Transverse colon (tissue), 4 donors: ENCODE measurements at regions of chr17 and their contacts with region 1.

Region 1: GRCh38 chr17:48791128-48792032 is 25.6 kb downstream of the TTLL6 start:
- DNase-seq: peak; percentile 90
- H3K4me3 ChIP-seq: no peak overlapping the region
- H3K27ac ChIP-seq: peak overlapping the region in 2 of 4 donors; percentile 1 to 44
- H3K4me1 ChIP-seq: peaks cover 4 to 40% (median 22%) of the 10 kb centered on the region in 4 donors
- H3K27me3 ChIP-seq: no peaks in the 10 kb centered on the region
- CTCF ChIP-seq: peak; percentile 68 to 88 (median 75)
- EP300 ChIP-seq: no peak
- POLR2A ChIP-seq: no peak

Region 2: DNA sequence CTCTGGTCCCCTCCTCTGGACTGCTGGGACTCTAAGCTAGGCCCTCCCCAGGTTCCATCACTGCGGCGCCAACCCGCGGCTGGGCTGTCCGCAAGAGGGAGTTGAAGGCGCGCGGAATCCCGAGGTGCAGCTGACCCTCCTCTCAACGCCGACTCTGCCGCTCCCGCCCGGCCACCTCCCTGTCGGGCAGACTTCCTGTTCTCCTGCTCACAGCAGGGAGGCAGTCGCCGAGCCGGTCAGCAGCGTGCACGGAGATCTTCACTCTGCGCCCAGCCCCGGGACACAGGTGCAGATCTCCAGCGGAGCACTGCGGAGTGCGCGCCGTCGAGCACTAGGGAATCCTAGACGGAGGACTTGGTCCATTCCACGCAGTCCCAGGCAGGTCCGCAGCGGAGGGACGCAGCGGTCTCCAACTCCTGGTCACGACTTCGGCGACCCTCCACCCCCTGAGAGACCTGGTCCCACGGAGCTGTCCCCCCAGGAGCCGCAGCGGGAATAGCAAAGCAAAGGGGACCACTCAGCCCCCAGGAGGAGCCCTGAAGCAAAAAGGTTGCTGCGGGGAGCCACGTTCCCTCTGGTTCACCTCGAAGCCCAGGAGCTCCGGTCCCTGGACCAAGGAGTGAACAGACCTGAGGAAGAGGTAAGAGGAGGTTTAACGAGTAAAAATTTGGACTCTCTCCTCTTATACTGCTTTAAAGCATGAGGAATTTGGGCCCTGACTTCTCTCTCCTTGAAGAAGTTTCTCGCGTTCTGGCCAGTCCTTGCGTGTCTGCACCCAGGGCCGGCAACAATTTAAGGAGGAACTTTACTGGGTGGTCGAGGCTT is 148.7 kb before region 1 on chr17:
- in situ Hi-C with region 1: no loop called
- intact Hi-C with region 1: no loop called
- DNase-seq: peak; percentile 81
- H3K4me3 ChIP-seq: peak overlapping the region in 3 of 4 donors; percentile 23 to 60 (median 57)
- H3K27ac ChIP-seq: peak overlapping the region; percentile 86 to 93 (median 90)
- H3K4me1 ChIP-seq: peaks cover 2 to 34% (median 21%) of the 10 kb centered on the region in 4 donors
- H3K27me3 ChIP-seq: peaks cover 94% of the 10 kb centered on the region
- CTCF ChIP-seq: peak in 2 of 5 experiments; percentile 20 to 50
- EP300 ChIP-seq: no peak
- POLR2A ChIP-seq: peak; percentile 84

Region 3: DNA sequence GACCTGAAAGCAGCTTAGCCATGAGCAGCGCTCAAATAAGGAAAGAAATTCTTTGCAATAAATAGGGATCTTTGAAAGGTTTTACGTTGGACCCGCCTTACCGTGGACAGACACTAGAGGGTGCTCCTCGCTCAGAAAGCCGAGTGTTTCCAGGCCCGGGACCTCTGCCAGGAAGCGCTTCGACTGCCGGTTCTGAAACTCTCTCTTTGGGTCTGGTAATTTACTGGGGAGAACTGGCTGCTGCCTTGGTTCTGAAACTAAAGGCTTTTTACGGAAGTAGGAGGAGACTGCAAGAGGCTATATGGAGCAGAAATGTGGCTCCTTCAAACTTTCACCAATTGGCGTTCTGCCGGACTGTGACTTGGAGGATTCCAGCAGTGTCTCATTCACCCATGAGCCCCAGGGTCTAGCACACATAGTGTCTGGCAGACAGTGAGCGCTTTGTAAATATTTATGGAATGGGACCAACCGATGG is 119.6 kb before region 1 on chr17:
- in situ Hi-C with region 1: loop called in 2 of 4 experiments (anchors 25 kb)
- intact Hi-C with region 1: loop called (anchors 5 kb)
- DNase-seq: peak; percentile 87
- H3K4me3 ChIP-seq: peak overlapping the region in 1 of 4 donors; percentile 25
- H3K27ac ChIP-seq: peak overlapping the region in 2 of 4 donors; percentile 36 to 43
- H3K4me1 ChIP-seq: peaks cover 2 to 11% (median 8%) of the 10 kb centered on the region in 4 donors
- H3K27me3 ChIP-seq: peaks cover 11% of the 10 kb centered on the region
- CTCF ChIP-seq: peak; percentile 84 to 92 (median 90)
- EP300 ChIP-seq: no peak
- POLR2A ChIP-seq: no peak

Region 4: GRCh38 chr17:48678141-48678971 is 113.0 kb before region 1 on chr17:
- in situ Hi-C with region 1: loop called in 3 of 4 experiments (anchors 10 to 25 kb)
- intact Hi-C with region 1: loop called (anchors 5 kb)
- DNase-seq: peak; percentile 68
- H3K4me3 ChIP-seq: no peak overlapping the region
- H3K27ac ChIP-seq: no peak overlapping the region
- H3K4me1 ChIP-seq: peaks cover 0 to 6% (median 3%) of the 10 kb centered on the region in 4 donors
- H3K27me3 ChIP-seq: peaks cover 12% of the 10 kb centered on the region
- CTCF ChIP-seq: peak; percentile 86 to 95 (median 92)
- EP300 ChIP-seq: no peak
- POLR2A ChIP-seq: no peak

Region 5: DNA sequence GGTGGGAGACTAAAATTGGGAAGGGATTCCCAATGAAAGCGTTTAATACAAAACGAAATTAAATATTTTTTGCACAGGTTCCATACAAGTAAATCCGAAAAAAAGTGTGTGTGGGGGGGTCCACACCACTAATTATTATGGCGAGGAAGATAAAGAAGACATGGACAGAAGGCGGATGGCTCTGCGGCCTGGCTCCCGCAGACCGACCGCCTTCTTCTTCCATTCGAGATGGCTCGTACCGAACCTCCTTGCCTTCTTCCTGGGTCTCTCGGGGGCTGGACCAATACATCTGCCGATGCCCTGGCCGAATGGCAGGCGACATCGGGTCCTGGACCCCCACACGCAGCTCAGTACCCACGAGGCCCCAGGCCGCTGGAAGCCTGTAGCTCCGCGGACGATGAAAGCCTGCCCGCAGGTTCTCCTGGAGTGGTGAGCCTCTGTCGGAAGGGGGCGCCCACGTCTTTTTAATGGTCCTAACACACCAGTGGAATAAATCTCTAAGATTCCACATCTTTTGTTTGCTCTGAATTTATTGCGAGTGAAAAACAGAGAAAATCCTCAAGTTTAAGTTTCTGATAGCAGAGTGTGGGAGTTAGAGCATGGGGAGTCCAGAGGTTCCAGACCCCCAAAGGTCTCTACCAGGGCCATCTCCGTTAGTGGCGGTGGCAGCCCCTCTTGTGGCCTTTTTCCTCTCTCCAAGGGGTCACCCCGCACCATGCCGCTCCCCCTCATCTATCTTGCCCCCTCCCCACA is 67.0 kb before region 1 on chr17:
- in situ Hi-C with region 1: no loop called
- intact Hi-C with region 1: loop called (anchors 1 kb)
- DNase-seq: peak; percentile 92
- H3K4me3 ChIP-seq: peak overlapping the region in 1 of 4 donors; percentile 45
- H3K27ac ChIP-seq: peak overlapping the region in 1 of 4 donors; percentile 61
- H3K4me1 ChIP-seq: peaks cover 12 to 50% (median 42%) of the 10 kb centered on the region in 4 donors
- H3K27me3 ChIP-seq: peaks cover 100% of the 10 kb centered on the region
- CTCF ChIP-seq: peak; percentile 74 to 84 (median 77)
- EP300 ChIP-seq: no peak
- POLR2A ChIP-seq: no peak

Region 6: GRCh38 chr17:48738803-48739526 is 52.4 kb before region 1 on chr17:
- in situ Hi-C with region 1: loop called in 3 of 4 experiments (anchors 10 kb)
- intact Hi-C with region 1: no loop called
- DNase-seq: no peak
- H3K4me3 ChIP-seq: no peak overlapping the region
- H3K27ac ChIP-seq: no peak overlapping the region
- H3K4me1 ChIP-seq: peaks cover 0 to 7% (median 2%) of the 10 kb centered on the region in 4 donors
- H3K27me3 ChIP-seq: peaks cover 100% of the 10 kb centered on the region
- CTCF ChIP-seq: no peak
- EP300 ChIP-seq: no peak
- POLR2A ChIP-seq: no peak

Region 7: GRCh38 chr17:49031965-49032928 is 240.9 kb after region 1 on chr17:
- in situ Hi-C with region 1: loop called in 1 of 4 experiments (anchors 25 kb)
- intact Hi-C with region 1: no loop called
- DNase-seq: peak; percentile 50
- H3K4me3 ChIP-seq: no peak overlapping the region
- H3K27ac ChIP-seq: no peak overlapping the region
- H3K4me1 ChIP-seq: peaks cover 0 to 6% (median 3%) of the 10 kb centered on the region in 4 donors
- H3K27me3 ChIP-seq: peaks cover 13% of the 10 kb centered on the region
- CTCF ChIP-seq: peak; percentile 64 to 79 (median 72)
- EP300 ChIP-seq: no peak
- POLR2A ChIP-seq: no peak